ENCODE measurements at regions of chrX and their contacts with region 1.

Region 1: DNA sequence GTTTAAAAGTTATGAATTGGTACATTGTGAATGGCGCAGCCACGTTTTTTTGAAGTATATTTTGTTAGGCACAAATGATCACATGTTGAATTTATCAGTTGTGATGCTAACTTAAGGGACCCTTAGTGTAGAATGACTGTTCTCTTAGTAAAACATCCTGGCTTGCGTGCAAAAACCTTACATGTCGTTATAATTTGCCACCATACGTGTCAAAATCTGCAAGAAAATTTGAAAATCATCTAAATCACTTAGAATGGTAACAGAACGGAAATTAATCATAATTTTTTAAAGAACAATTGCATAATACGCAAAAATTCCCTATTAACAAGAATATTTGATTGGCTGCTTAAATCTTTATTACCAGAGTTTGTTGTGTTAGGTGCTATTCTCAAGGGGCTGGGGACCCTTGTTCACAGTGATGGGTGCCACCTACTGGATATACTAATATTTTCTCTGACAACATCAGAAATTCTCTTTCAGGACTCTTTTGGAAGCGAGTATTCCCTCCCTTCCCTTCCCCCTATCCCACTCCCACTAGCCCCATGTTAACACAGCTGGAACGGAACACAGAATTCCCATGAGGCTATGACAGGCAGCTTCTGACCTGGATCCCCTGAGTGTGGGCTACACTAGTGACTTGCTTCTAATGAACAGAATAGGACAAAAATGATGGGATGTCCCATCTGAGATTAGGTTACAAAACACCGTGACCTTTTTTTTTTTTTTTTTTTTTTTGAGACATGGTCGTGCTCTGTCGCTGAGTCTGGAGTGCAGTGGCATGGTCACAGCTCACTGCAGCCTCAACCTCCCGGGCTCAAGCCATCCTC is 71.8 kb downstream of the SUPT20HL2 start:
- DNase-seq: peak in 4 of 14 experiments; percentile 22 to 49 (median 44)
- ATAC-seq: peak; percentile 48
- H3K4me3 ChIP-seq: no peak overlapping the region
- H3K4me3 Mint-ChIP-seq: no peak overlapping the region
- H3K27ac ChIP-seq: no peak overlapping the region
- H3K27ac Mint-ChIP-seq: no peak overlapping the region
- H3K4me1 ChIP-seq: no peaks in the 10 kb centered on the region
- H3K4me1 Mint-ChIP-seq: no peaks in the 10 kb centered on the region
- H3K27me3 ChIP-seq: no peaks in the 10 kb centered on the region
- H3K27me3 Mint-ChIP-seq: no peaks in the 10 kb centered on the region
- CTCF ChIP-seq: peak; percentile 36

Region 2: DNA sequence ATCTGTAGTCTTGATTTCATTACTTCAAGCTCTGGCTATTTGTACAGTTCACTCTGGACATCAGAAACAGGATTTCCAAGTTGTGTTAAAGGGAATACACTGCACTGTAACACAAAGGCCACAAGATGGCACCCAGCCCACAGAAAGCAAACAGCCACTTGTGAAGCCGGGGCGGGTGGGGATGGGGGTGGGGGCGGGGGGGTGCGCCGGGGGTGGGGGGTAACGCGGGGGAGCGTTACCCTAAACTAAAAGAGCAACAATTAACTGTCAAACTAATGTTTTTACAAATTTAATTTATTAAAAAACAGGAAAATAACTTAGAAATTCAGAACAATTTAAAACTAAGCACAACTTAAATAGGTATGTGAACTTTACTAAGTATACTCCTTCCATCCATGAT is 547.4 kb before region 1 on chrX:
- CTCF ChIA-PET with region 1: no interaction called
- POLR2A ChIA-PET with region 1: no interaction called
- intact Hi-C with region 1: loop called in 1 of 2 experiments (anchors 5 kb)
- DNase-seq: peak; percentile 10 to 73 (median 28)
- ATAC-seq: peak; percentile 71
- H3K4me3 ChIP-seq: no peak overlapping the region
- H3K4me3 Mint-ChIP-seq: no peak overlapping the region
- H3K27ac ChIP-seq: no peak overlapping the region
- H3K27ac Mint-ChIP-seq: no peak overlapping the region
- H3K4me1 ChIP-seq: no peaks in the 10 kb centered on the region
- H3K4me1 Mint-ChIP-seq: no peaks in the 10 kb centered on the region
- H3K27me3 ChIP-seq: no peaks in the 10 kb centered on the region
- H3K27me3 Mint-ChIP-seq: no peaks in the 10 kb centered on the region
- CTCF ChIP-seq: peak; percentile 20

Region 3: DNA sequence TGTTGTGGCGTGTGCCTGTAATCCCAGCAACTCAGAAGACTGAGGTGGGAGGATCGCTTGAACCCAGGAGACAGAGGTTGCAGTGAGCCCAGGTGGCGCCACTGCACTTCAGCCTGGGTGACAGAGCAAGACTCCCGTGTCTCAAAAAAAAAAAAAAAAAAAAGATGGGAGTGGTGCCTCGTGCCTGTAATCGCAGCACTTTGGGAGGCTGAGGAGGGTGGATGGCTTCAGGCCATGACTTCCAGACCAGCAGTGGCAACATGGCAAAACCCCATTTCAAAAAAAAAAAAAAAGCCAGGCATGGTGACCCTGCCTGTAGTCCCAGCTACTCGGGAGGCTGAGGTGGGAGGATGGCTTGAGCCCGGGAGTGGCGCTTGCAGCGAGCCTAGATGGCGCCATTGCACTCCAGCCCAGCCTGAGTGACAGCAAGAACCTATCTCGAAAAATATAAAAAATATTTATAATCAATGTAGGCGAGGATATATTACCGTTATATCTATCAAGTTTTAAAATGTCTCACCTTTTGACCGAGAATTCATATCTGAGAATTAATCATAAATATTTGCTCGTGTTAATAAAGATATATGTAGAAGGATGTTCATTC is 160.3 kb before region 1 on chrX:
- CTCF ChIA-PET with region 1: interaction called, 3 read pairs
- POLR2A ChIA-PET with region 1: no interaction called
- intact Hi-C with region 1: loop called (anchors 1 to 5 kb)
- DNase-seq: peak; percentile 10 to 78 (median 46)
- ATAC-seq: peak; percentile 90
- H3K4me3 ChIP-seq: peak overlapping the region; percentile 14
- H3K4me3 Mint-ChIP-seq: no peak overlapping the region
- H3K27ac ChIP-seq: no peak overlapping the region
- H3K27ac Mint-ChIP-seq: no peak overlapping the region
- H3K4me1 ChIP-seq: peaks cover 4% of the 10 kb centered on the region
- H3K4me1 Mint-ChIP-seq: peaks cover 7% of the 10 kb centered on the region
- H3K27me3 ChIP-seq: no peaks in the 10 kb centered on the region
- H3K27me3 Mint-ChIP-seq: no peaks in the 10 kb centered on the region
- CTCF ChIP-seq: peak; percentile 65

Region 4: GRCh38 chrX:24253469-24253868 is 11.4 kb after region 1 on chrX:
- CTCF ChIA-PET with region 1: no interaction called
- POLR2A ChIA-PET with region 1: no interaction called
- intact Hi-C with region 1: no loop called
- DNase-seq: no peak
- ATAC-seq: no peak
- H3K4me3 ChIP-seq: no peak overlapping the region
- H3K4me3 Mint-ChIP-seq: no peak overlapping the region
- H3K27ac ChIP-seq: no peak overlapping the region
- H3K27ac Mint-ChIP-seq: no peak overlapping the region
- H3K4me1 ChIP-seq: no peaks in the 10 kb centered on the region
- H3K4me1 Mint-ChIP-seq: no peaks in the 10 kb centered on the region
- H3K27me3 ChIP-seq: no peaks in the 10 kb centered on the region
- H3K27me3 Mint-ChIP-seq: no peaks in the 10 kb centered on the region
- CTCF ChIP-seq: no peak

Measured in CD4-positive, alpha-beta T cell (primary cell).